ENCODE measurements at regions of chr9 and their contacts with region 1.

Region 1: DNA sequence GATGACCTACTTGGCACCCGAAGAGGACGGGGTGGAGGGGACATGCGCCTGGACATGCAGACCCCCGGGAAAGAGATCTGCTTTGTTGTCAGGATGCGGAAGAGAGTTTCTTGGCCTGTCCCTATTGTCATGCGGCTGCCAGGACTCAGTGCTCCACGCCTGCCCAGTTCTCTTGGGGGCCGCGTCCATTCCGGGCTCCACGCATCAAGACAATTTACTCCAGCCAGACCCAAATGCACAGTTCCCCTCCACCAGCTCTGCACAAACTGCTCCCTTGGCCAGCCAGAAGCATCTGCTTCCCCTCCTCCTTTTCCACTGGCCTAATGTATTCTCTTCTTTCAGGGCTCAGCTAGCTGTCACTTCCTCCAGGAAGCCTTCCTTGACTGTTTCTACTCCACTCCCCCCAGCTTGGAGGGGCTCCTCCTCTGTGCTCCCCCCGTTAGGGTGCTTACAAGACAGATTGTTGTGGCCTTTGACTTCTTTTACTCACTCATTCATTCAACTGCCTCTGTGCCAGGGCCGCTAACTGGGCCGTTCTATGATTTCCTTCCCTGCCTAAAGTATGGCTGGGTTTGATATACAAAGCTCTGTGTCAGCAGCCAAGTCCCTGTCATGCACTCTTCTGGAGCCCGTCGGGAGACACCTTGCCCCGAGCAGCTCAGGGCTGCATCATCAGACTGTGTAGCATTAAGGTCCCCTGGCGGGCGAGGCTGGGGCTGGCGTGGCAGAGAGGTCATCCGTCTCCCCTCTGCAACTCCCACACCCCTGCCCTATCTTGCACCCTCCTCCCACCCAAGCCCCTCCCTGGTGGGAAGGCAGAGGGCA is 6.6 kb downstream of the FIBCD1 start:
- DNase-seq: no peak
- ATAC-seq: peak; percentile 36; the same call in 1 of the 2 replicates
- H3K4me3 ChIP-seq: no peak overlapping the region
- H3K27ac ChIP-seq: no peak overlapping the region
- H3K4me1 ChIP-seq: peaks cover 36% of the 10 kb centered on the region
- H3K27me3 ChIP-seq: no peaks in the 10 kb centered on the region
- CTCF ChIP-seq: no peak

Region 2: DNA sequence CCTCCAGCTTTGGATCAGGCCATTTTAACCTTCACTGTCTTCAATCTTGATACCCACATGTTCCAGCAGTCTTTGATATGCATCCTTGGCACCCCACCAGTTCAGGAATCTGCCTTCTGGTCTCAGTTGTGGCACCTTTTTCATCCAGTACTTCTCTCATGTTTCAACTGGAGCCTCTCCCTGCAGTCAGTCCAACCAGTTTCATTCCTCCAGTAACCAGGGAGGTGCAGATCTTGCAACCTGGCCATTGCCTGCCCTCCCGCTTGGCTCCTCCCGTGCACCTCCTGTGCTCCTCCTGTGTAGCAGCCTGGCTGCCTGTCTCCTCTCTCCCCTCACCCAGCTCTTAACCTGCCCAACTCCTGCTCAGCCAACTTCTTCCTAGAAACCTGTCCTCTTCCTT is 332.8 kb before region 1 on chr9:
- CTCF ChIA-PET with region 1: no interaction called
- POLR2A ChIA-PET with region 1: no interaction called
- in situ Hi-C with region 1: no loop called
- intact Hi-C with region 1: no loop called
- DNase-seq: no peak
- ATAC-seq: no peak
- H3K4me3 ChIP-seq: no peak overlapping the region
- H3K27ac ChIP-seq: no peak overlapping the region
- H3K4me1 ChIP-seq: no peaks in the 10 kb centered on the region
- H3K27me3 ChIP-seq: no peaks in the 10 kb centered on the region
- CTCF ChIP-seq: no peak

Region 3: GRCh38 chr9:130956636-130957450 is 24.4 kb after region 1 on chr9:
- CTCF ChIA-PET with region 1: interaction called, 10 read pairs
- POLR2A ChIA-PET with region 1: no interaction called
- in situ Hi-C with region 1: no loop called
- intact Hi-C with region 1: no loop called
- DNase-seq: no peak
- ATAC-seq: no peak
- H3K4me3 ChIP-seq: no peak overlapping the region
- H3K27ac ChIP-seq: no peak overlapping the region
- H3K4me1 ChIP-seq: no peaks in the 10 kb centered on the region
- H3K27me3 ChIP-seq: no peaks in the 10 kb centered on the region
- CTCF ChIP-seq: no peak

Region 4: GRCh38 chr9:130997925-130998596 is 65.6 kb after region 1 on chr9:
- CTCF ChIA-PET with region 1: no interaction called
- POLR2A ChIA-PET with region 1: interaction called, 16 read pairs
- in situ Hi-C with region 1: no loop called
- intact Hi-C with region 1: no loop called
- DNase-seq: no peak
- ATAC-seq: peak; percentile 95
- H3K4me3 ChIP-seq: no peak overlapping the region
- H3K27ac ChIP-seq: no peak overlapping the region
- H3K4me1 ChIP-seq: peaks cover 3% of the 10 kb centered on the region; the same call in 1 of the 2 replicates
- H3K27me3 ChIP-seq: no peaks in the 10 kb centered on the region
- CTCF ChIP-seq: peak; percentile 81